ENCODE measurements at regions of chr2 and their contacts with region 1.

Region 1: GRCh38 chr2:146917431-146918042 is 927.3 kb upstream of the ACVR2A start:
- DNase-seq: no peak
- ATAC-seq: peak; percentile 69
- H3K4me3 ChIP-seq: no peak overlapping the region
- H3K4me1 ChIP-seq: peaks cover 12% of the 10 kb centered on the region
- CTCF ChIP-seq: no peak

Region 2: GRCh38 chr2:146950361-146950760 is 32.8 kb after region 1 on chr2:
- intact Hi-C with region 1: loop called in 1 of 2 experiments (anchors 2 kb)
- DNase-seq: no peak
- ATAC-seq: no peak
- H3K4me3 ChIP-seq: no peak overlapping the region
- H3K4me1 ChIP-seq: no peaks in the 10 kb centered on the region
- CTCF ChIP-seq: no peak